ENCODE measurements at regions of chr22 and their contacts with region 1.

Region 1: DNA sequence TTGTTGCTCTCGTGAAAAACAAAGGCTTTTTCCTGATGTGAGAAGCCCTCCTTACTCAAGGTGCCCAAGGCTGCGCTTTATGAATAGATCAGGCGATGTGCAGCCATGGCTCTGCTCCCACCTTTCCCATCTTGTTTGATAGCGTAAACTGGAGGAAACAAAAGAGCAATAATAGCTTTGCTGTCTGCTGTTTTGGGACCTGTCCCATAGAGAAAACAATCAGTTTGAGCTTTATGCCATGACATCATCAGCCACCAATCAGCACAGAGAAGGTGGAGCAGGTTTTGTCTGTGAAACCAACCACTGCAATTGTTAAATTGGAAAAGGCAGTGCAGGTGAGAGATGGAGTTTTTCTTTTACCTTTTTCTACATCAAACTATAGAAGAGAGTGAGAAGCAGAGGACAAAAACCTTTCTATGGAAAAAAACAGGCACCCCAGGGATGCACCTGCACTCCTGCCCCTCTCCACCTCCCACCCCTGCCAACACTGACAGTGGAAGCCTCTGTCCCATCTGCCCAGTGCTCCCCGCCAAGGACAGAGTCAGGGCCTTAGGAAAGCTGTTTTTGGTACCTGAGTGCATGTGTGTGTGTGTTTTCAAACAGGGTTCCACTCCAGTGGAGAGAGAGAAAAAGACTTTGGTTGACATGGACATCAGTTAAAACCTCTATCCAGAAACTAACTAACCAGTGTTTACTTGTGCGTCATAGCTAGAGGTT is 80.7 kb downstream of the MICAL3 start:
- DNase-seq: no peak
- ATAC-seq: no peak
- H3K4me3 Mint-ChIP-seq: no peak overlapping the region
- H3K27ac Mint-ChIP-seq: no peak overlapping the region
- H3K4me1 Mint-ChIP-seq: peaks cover 100% of the 10 kb centered on the region
- H3K27me3 Mint-ChIP-seq: no peaks in the 10 kb centered on the region
- CTCF ChIP-seq: no peak

Region 2: DNA sequence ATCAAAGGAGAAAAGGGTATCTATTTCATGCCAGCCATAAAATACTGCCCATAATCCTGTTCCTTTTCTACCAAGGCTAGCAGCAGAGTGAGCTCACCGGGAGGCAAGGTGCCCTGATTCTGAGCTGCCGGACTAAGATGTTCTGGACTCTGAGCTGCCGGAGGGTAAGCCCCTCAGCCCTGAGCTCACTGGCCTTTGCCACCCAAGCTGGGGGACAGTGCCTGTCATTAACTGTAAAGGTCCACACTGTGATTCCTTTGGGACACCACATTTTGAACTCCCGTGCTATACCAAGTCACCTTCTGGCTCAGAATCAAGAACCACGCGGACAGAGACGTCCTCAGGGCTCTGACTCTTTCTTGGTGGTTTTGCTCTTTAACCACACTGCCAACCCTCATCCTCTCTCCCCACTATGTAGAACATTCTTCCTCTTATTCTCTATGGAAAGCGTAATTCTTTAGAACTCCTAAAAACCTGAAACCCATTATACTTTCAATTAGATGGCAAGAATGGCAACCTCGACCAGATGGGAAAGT is 81.0 kb before region 1 on chr22:
- CTCF ChIA-PET with region 1: no interaction called
- POLR2A ChIA-PET with region 1: no interaction called
- intact Hi-C with region 1: no loop called
- DNase-seq: no peak
- ATAC-seq: no peak
- H3K4me3 Mint-ChIP-seq: no peak overlapping the region
- H3K27ac Mint-ChIP-seq: no peak overlapping the region
- H3K4me1 Mint-ChIP-seq: no peaks in the 10 kb centered on the region
- H3K27me3 Mint-ChIP-seq: no peaks in the 10 kb centered on the region
- CTCF ChIP-seq: no peak

Region 3: GRCh38 chr22:17910561-17911311 is 33.0 kb before region 1 on chr22:
- CTCF ChIA-PET with region 1: no interaction called
- POLR2A ChIA-PET with region 1: no interaction called
- intact Hi-C with region 1: loop called (anchors 5 kb)
- DNase-seq: no peak
- ATAC-seq: no peak
- H3K4me3 Mint-ChIP-seq: no peak overlapping the region
- H3K27ac Mint-ChIP-seq: no peak overlapping the region
- H3K4me1 Mint-ChIP-seq: peaks cover 66% of the 10 kb centered on the region
- H3K27me3 Mint-ChIP-seq: no peaks in the 10 kb centered on the region
- CTCF ChIP-seq: no peak

Measured in activated B cell treated with CpG ODN at 0.5 μM for 24 hours (primary cell).